Heart left ventricle (tissue), 16 donors: ENCODE measurements at regions of chr18 and their contacts with region 1.

Region 1: DNA sequence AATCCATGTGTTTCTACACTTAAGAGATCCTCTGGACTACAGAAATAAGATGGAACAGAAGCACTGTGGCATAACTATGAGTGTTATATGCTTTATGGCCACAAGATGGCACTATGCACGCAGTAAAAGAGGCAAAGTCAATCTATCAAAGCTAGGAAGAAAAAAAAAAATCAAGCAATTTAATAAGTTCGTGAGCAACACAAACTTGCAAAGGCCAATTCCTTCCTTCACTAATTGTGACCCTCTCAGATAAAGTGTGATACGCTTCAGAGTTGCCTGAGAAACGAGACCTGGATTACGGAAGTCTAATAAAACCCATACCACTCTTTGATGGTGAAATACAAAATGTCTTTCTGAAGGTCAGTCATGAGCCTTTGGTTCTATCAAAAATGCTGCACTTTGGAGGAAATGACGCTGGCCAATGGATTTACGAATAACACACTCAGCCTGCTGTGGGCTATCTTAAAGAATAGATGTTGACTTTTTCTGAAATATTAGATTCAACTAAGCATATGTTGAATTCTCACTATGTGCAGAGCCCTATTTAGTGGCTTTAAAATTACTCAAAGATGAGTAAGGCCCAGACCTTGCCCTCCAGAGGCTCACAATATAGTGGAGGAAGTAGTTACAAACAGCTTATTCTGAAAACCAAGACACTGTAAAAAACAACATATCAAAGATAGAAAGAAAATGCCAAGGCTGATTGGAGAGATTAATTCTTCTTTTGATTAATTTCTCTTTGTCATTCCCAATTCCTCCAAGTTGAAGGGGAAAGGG is 35.5 kb upstream of the TTR start:
- DNase-seq: peak in 1 of 5 donors; percentile 12
- ATAC-seq: peak in 3 of 4 donors; percentile 51 to 73 (median 63)
- H3K4me3 ChIP-seq: peak overlapping the region in 1 of 12 donors; percentile 21
- H3K27ac ChIP-seq: no peak overlapping the region
- H3K4me1 ChIP-seq: no peaks in the 10 kb centered on the region
- H3K27me3 ChIP-seq: peaks cover 0 to 12% (median 0%) of the 10 kb centered on the region in 9 donors
- CTCF ChIP-seq: peak; percentile 78 to 90 (median 82)
- POLR2A ChIP-seq: no peak

Region 2: DNA sequence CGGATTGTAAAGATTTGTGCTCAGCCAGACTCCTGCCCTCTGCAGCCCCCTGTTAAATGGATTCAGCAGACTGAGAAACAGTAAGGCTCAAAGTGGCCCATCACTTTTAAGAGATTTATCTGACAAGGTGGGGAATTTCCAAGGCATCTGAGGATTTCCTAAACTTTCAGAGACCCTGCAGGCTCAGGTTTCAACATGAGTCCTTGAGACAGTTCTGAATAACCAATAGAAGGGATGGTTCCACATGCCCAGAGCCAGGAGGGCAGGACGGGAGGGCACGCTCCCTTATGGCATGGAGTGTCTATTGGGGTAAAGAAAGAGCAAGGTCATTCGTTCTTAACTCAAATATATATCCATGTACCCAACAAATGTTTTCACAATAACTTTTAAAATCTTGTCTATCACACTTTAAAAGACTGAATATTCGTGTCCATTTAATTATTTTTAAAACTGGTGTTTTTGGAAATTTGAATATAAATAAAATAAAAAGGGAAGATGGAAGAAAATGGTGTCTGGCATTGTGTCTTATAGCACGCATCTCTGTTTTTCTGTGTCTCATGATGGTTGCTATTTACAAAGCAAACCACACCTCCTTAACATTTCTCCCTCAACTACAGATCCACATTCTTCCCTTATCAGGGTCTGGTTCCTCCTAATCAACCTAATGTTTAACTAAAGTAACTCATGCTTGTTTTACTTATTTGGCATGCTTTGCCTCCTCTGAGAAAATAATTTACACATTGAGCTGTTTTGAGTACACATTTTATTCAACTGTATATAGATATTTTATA is 294.2 kb before region 1 on chr18:
- intact Hi-C with region 1: no loop called
- DNase-seq: no peak
- ATAC-seq: peak in 2 of 4 donors; percentile 61 to 71
- H3K4me3 ChIP-seq: no peak overlapping the region
- H3K27ac ChIP-seq: peak overlapping the region in 2 of 12 donors; percentile 8 to 12
- H3K4me1 ChIP-seq: peaks cover 0 to 7% (median 0%) of the 10 kb centered on the region in 12 donors
- H3K27me3 ChIP-seq: no peaks in the 10 kb centered on the region
- CTCF ChIP-seq: no peak
- POLR2A ChIP-seq: no peak

Region 3: DNA sequence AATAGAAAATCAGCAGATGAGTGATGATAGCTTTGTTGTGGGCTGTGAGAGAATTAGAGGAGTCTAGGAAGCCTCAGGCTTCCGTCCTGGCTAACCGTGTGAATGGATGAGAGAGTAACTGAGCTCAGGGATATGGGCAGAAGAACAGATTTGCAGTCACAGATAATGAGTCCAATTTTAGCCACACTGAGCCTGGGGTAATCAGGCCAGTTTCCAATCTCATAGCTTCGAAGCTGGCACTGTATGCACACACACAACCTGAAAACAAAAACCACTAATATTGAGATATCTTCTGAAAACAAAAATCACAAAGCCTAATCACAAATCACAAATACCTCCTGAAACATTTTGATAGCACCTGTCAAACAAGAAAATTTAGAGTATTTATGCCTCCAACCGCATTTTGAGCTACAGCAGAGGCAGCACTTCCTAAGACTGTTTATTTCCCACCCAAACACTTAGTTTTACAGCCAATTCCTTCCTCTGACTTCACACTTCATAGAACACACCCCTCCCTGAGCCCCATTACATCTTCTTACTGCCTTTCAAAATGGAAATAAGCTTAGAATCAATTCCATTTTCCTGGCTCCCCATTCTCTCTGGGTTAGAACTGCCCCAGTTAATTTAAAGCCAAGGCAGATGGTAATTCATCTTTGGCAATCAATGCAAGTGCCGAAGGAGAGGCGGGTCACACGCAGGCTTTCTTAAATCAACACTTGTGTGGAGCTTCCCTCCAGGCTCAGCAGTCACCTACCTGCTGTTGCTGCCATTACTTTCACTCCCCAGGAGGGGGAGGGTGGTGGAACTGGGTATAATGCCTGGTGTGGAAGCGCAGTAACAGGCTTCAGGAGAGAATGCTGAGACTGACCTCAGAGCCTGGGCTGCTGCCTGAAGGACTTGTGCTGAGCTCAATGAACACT is 54.4 kb after region 1 on chr18:
- intact Hi-C with region 1: loop called in 1 of 10 experiments (anchors 10 kb)
- DNase-seq: peak in 1 of 5 donors; percentile 28
- ATAC-seq: peak in 3 of 4 donors; percentile 64 to 83 (median 77)
- H3K4me3 ChIP-seq: no peak overlapping the region
- H3K27ac ChIP-seq: peak overlapping the region in 1 of 12 donors; percentile 24
- H3K4me1 ChIP-seq: peaks cover 0 to 22% (median 0%) of the 10 kb centered on the region in 12 donors
- H3K27me3 ChIP-seq: no peaks in the 10 kb centered on the region
- CTCF ChIP-seq: peak in 2 of 12 donors; percentile 13 to 29
- POLR2A ChIP-seq: no peak

Region 4: DNA sequence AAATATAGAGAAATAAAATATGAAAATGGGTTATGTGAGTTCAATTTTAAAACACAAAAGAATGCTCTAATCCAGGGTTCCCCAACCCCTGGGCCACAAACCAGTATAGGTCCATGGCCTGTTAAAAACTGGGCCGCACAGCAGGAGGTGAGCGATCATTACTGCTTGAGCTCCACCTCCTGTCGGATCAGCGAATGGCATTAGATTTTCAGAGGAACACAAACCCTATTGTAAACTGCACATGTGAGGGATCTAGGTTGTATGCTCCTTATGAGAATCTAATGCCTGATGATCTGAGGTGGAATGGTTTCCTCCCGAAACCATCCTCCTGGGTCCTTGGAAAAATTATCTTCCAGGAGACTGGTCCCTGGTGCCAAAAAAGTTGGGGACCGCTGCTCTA is 70.2 kb after region 1 on chr18:
- intact Hi-C with region 1: loop called in 2 of 10 experiments (anchors 2 to 10 kb)
- DNase-seq: no peak
- ATAC-seq: no peak
- H3K4me3 ChIP-seq: no peak overlapping the region
- H3K27ac ChIP-seq: no peak overlapping the region
- H3K4me1 ChIP-seq: no peaks in the 10 kb centered on the region
- H3K27me3 ChIP-seq: no peaks in the 10 kb centered on the region
- CTCF ChIP-seq: peak in 1 of 12 donors; percentile 6
- POLR2A ChIP-seq: no peak

Region 5: DNA sequence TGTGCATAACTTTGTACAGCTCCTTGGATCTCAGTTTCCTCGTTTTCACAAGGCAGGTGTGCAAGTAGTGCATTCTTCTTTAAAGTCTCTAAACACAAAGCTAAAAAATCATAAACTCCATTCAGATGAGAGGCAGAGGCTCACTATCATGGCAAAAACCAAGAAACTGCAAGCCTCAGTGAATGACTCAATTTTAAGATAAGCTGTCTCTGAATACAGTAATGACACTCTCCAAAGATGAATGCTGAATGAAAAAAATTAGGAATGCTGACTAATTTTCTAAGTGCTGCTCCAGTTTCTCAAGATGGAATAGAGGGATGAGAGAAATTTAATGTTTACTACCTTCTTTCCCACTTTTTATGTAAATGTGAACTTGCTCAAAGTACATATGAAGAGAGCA is 111.0 kb after region 1 on chr18:
- intact Hi-C with region 1: no loop called
- DNase-seq: no peak
- ATAC-seq: no peak
- H3K4me3 ChIP-seq: no peak overlapping the region
- H3K27ac ChIP-seq: no peak overlapping the region
- H3K4me1 ChIP-seq: no peaks in the 10 kb centered on the region
- H3K27me3 ChIP-seq: no peaks in the 10 kb centered on the region
- CTCF ChIP-seq: no peak
- POLR2A ChIP-seq: no peak

Region 6: DNA sequence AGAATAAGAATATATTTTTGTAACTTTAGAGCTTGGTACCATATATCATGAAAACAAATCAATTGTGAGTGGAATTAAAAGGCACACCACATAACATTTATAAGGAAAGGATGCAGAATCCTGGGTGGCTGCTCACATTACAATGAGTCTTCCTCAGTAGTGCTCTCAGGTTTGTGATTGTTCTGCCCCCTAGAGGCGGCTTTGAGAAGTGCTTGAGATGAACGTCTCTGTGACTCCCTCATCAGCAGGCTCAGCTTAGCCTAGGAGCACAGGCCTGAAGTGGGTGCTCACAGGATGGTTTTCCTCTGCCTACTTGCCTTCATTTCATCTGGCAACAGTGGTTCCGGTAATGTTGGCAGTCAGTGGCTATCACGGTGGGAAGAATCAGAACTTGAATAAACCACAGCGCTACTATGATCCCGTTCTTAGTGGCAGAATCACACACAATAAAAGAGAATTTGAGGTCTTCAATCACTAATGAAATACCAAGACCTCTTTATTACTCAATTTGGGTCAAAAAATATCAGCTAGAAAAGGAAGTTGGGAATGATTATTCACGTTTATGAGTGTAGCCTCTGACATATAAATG is 166.3 kb after region 1 on chr18:
- intact Hi-C with region 1: loop called (anchors 1 to 5 kb)
- DNase-seq: peak in 4 of 5 donors; percentile 51 to 75 (median 72)
- ATAC-seq: peak; percentile 63 to 90 (median 86)
- H3K4me3 ChIP-seq: no peak overlapping the region
- H3K27ac ChIP-seq: no peak overlapping the region
- H3K4me1 ChIP-seq: peaks cover 0 to 26% (median 3%) of the 10 kb centered on the region in 12 donors
- H3K27me3 ChIP-seq: peaks cover 0 to 9% (median 0%) of the 10 kb centered on the region in 9 donors
- CTCF ChIP-seq: peak; percentile 78 to 94 (median 86)
- POLR2A ChIP-seq: no peak

Region 7: DNA sequence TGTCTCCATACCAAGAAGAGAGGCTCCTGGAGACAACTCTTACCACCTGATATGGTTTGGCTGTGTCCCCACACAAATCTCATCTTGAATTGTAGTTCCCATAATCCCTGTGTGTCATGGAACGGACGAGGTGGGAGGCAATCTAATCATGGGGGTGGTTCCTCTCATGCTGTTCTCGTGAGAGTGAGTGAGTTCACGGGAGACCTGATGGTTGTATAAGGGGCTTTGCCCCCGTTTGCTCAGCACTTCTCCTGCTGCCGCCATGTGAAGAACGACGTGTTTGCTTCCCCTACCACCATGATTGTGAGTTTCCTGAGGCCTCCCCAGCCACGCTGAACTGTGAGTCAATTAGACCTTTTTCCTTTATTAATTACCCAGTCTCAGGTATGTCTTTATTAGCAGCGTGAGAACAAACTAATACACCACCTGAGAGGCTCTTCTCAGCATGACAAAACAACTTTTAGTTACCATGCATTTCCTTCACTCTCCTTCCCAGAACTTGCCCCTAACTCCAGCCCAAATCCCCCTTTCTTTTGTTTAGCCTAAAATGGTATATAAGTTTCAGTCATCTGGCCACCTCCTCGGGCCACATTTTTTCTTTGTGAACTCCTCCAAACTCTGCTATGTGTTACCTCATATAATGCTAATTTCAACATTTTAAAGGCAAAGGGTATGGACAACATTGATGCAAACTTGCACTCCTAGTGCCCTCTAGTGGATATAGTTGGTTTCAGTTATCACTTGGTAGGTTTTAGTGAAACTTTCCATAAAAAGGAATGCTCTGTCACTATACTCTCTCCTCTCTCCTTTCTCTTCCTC is 263.2 kb after region 1 on chr18:
- intact Hi-C with region 1: loop called (anchors 2 to 5 kb)
- DNase-seq: no peak
- ATAC-seq: peak in 1 of 4 donors; percentile 56
- H3K4me3 ChIP-seq: no peak overlapping the region
- H3K27ac ChIP-seq: no peak overlapping the region
- H3K4me1 ChIP-seq: peaks cover 0 to 6% (median 0%) of the 10 kb centered on the region in 12 donors
- H3K27me3 ChIP-seq: no peaks in the 10 kb centered on the region
- CTCF ChIP-seq: peak; percentile 53 to 79 (median 70)
- POLR2A ChIP-seq: no peak